ENCODE measurements at regions of chr18 and their contacts with region 1.

Region 1: DNA sequence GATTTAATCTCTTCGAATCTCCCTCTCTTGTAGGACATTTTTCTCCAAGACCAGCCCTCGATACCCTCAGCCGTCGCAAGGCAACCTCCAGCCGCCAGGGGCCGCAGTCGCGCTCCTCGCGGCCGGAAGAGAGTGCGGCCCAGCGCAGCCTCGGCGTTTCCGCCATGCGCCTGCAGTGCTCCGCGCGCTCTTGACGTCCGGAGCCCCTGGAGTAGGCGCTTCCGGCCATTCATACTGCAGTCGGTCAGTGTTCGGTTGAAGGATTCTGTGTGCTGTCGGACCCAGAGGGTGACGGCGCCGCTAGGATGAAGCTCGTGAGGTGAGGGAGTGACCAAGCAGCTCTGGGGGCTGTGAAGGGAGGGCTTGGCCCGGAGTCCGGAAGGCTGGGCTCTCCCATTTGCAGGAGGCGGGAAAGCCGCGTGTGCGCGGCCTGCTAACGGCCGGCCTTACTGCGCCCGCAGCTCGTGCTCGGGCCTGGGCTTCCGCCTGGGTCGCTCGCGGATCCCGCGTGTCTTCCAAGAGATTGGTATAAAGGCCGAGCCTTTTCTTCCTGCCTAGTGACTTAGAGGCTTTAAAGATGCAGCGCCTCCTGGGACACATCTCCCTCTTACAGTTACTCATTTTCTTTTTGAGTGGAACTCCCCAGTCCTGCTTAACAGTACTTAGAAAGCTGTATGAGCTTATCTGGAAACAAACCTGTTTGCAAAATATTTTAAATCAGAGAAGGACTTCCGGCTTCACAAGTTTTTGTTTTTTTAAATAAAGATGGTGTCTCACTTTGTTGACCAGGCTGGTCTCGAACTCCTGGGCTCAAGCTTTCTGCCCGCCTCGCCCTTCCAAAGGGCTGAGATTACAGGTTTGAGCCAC is at the start of gene SNRPD1:
- DNase-seq: peak; percentile 89 to 94
- H3K4me3 ChIP-seq: peak within 1 kb of the TSS; percentile 77
- H3K4me3 Mint-ChIP-seq: peak within 1 kb of the TSS; percentile 90
- H3K27ac Mint-ChIP-seq: peak within 1 kb of the TSS; percentile 96
- H3K4me1 ChIP-seq: 0 out of 2 replicates have a peak, but pooled peaks cover 4% of the 10 kb centered on the region
- H3K4me1 Mint-ChIP-seq: peaks cover 7% of the 10 kb centered on the region
- H3K27me3 ChIP-seq: no peaks in the 10 kb centered on the region
- H3K27me3 Mint-ChIP-seq: no peaks in the 10 kb centered on the region
- CTCF ChIP-seq: peak; percentile 80 to 92
- total RNA-seq, gene SNRPD1: 129 and 134 TPM in 2 replicates

Region 2: GRCh38 chr18:21672521-21673267 is 60.3 kb after region 1 on chr18:
- CTCF ChIA-PET with region 1: no interaction called
- POLR2A ChIA-PET with region 1: no interaction called
- intact Hi-C with region 1: loop called (anchors 10 kb)
- DNase-seq: peak in 1 of 2 experiments; percentile 41
- H3K4me3 ChIP-seq: no peak overlapping the region
- H3K4me3 Mint-ChIP-seq: no peak overlapping the region
- H3K27ac Mint-ChIP-seq: no peak overlapping the region
- H3K4me1 ChIP-seq: peaks cover 12% of the 10 kb centered on the region
- H3K4me1 Mint-ChIP-seq: peaks cover 8% of the 10 kb centered on the region
- H3K27me3 ChIP-seq: no peaks in the 10 kb centered on the region
- H3K27me3 Mint-ChIP-seq: no peaks in the 10 kb centered on the region
- CTCF ChIP-seq: no peak

Measured in Caco-2 (cell line).